ENCODE measurements at regions of chr1 and their contacts with region 1.

Region 1: DNA sequence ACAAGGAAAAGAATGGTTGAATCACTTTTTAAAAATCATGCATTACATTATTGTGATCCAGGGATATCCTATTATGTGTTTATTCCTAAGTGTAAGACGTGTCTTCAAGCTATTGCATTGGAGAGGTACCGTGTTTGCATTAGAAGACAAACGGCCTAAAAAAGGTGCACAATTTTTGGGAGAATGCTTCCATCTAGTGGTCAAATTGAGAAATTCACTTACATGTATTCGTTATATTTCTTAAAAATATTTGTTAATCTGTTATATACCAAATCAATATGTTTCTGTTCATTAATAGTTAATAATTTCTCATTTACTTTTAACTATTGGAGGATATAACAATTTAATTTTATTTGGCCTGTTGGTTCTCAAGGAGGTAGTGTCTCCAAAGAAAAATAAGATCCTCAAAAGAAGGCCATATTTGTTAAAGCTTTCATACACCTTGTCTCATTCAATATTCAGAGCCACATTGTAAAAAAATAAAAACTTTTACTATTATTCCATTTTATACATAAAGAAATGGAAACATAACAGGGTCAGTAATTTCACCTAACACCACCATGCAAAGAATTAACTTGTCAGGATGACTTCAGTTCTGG is 40.5 kb upstream of the KCTD3 start:
- DNase-seq: peak in 7 of 9 donors; percentile 16 to 56 (median 47)
- ATAC-seq: peak; percentile 52
- H3K4me3 ChIP-seq: no peak overlapping the region
- H3K4me3 Mint-ChIP-seq: no peak overlapping the region
- H3K27ac ChIP-seq: no peak overlapping the region
- H3K27ac Mint-ChIP-seq: no peak overlapping the region
- H3K4me1 ChIP-seq: no peaks in the 10 kb centered on the region
- H3K4me1 Mint-ChIP-seq: peaks cover 0 to 3% (median 0%) of the 10 kb centered on the region in 7 donors
- H3K27me3 ChIP-seq: no peaks in the 10 kb centered on the region
- H3K27me3 Mint-ChIP-seq: peaks cover 6 to 20% (median 12%) of the 10 kb centered on the region in 5 donors

Region 2: DNA sequence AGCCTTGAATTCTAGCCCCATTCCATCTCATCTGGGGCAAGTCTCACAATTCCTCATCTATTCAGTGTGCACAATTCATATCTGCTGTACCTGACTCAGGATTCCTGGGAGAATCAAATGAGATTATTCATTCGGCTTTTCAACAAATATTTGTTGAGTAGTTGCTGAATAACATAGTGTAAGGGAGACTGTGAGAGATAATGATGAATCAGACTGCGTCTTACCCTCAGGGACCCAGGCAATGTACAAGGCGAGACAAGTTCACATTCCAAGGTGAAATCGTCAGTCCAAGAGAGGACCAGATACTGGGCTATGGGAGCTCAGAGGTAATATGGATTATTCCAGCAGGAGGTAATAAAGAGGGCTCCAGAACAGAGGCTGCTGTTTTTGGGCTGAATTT is 1313.5 kb before region 1 on chr1:
- CTCF ChIA-PET with region 1: interaction called, 4 read pairs
- POLR2A ChIA-PET with region 1: no interaction called
- intact Hi-C with region 1: loop called in 1 of 2 experiments (anchors 1 kb)
- DNase-seq: no peak
- ATAC-seq: no peak
- H3K4me3 ChIP-seq: no peak overlapping the region
- H3K4me3 Mint-ChIP-seq: no peak overlapping the region
- H3K27ac ChIP-seq: no peak overlapping the region
- H3K27ac Mint-ChIP-seq: no peak overlapping the region
- H3K4me1 ChIP-seq: no peaks in the 10 kb centered on the region
- H3K4me1 Mint-ChIP-seq: peaks cover 0 to 10% (median 5%) of the 10 kb centered on the region in 7 donors
- H3K27me3 ChIP-seq: no peaks in the 10 kb centered on the region
- H3K27me3 Mint-ChIP-seq: peaks cover 7 to 38% (median 13%) of the 10 kb centered on the region in 5 donors

Region 3: GRCh38 chr1:214660862-214661261 is 865.8 kb before region 1 on chr1:
- CTCF ChIA-PET with region 1: interaction called, 4 read pairs
- POLR2A ChIA-PET with region 1: no interaction called
- intact Hi-C with region 1: loop called (anchors 1 kb)
- DNase-seq: peak in 7 of 9 donors; percentile 7 to 51 (median 45)
- ATAC-seq: peak; percentile 49
- H3K4me3 ChIP-seq: no peak overlapping the region
- H3K4me3 Mint-ChIP-seq: no peak overlapping the region
- H3K27ac ChIP-seq: no peak overlapping the region
- H3K27ac Mint-ChIP-seq: peak overlapping the region in 4 of 9 donors; percentile 8 to 42 (median 30)
- H3K4me1 ChIP-seq: no peaks in the 10 kb centered on the region
- H3K4me1 Mint-ChIP-seq: peaks cover 0 to 20% (median 7%) of the 10 kb centered on the region in 7 donors
- H3K27me3 ChIP-seq: no peaks in the 10 kb centered on the region
- H3K27me3 Mint-ChIP-seq: no peaks in the 10 kb centered on the region

Region 4: GRCh38 chr1:214823311-214824117 is 703.1 kb before region 1 on chr1:
- CTCF ChIA-PET with region 1: no interaction called
- POLR2A ChIA-PET with region 1: no interaction called
- intact Hi-C with region 1: loop called in 1 of 2 experiments (anchors 10 kb)
- DNase-seq: no peak
- ATAC-seq: no peak
- H3K4me3 ChIP-seq: no peak overlapping the region
- H3K4me3 Mint-ChIP-seq: no peak overlapping the region
- H3K27ac ChIP-seq: no peak overlapping the region
- H3K27ac Mint-ChIP-seq: no peak overlapping the region
- H3K4me1 ChIP-seq: no peaks in the 10 kb centered on the region
- H3K4me1 Mint-ChIP-seq: no peaks in the 10 kb centered on the region
- H3K27me3 ChIP-seq: no peaks in the 10 kb centered on the region
- H3K27me3 Mint-ChIP-seq: peaks cover 0 to 8% (median 7%) of the 10 kb centered on the region in 5 donors

Region 5: GRCh38 chr1:215606564-215607168 is 80.0 kb after region 1 on chr1:
- CTCF ChIA-PET with region 1: no interaction called
- POLR2A ChIA-PET with region 1: no interaction called
- intact Hi-C with region 1: loop called in 1 of 2 experiments (anchors 5 kb)
- DNase-seq: no peak
- ATAC-seq: no peak
- H3K4me3 ChIP-seq: no peak overlapping the region
- H3K4me3 Mint-ChIP-seq: no peak overlapping the region
- H3K27ac ChIP-seq: no peak overlapping the region
- H3K27ac Mint-ChIP-seq: no peak overlapping the region
- H3K4me1 ChIP-seq: no peaks in the 10 kb centered on the region
- H3K4me1 Mint-ChIP-seq: no peaks in the 10 kb centered on the region
- H3K27me3 ChIP-seq: no peaks in the 10 kb centered on the region
- H3K27me3 Mint-ChIP-seq: no peaks in the 10 kb centered on the region